ENCODE measurements at regions of chr14 and their contacts with region 1.

Region 1: DNA sequence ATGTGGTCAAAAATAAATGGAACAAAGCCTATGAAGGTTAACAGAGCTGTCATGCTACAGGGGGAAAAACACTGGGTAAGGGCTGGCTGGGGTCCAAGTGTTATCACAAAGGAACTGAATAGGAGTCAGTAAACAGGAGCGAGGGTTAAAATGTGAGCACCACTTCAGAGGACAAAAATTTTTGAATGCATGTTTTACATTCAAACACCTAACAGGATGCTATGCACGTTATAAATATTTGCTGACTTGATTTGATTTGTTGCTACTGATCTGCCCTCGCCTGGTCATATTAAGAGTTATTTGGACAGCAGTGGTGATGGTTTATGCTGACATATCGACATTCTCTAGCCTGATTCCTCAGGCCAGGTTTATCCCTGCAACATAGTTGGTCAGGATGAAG is 7.4 kb upstream of the KTN1 start:
- DNase-seq: peak in 3 of 5 donors; percentile 31 to 45 (median 43)
- ATAC-seq: peak; percentile 34 to 81 (median 49)
- H3K4me3 ChIP-seq: no peak overlapping the region
- H3K27ac ChIP-seq: no peak overlapping the region
- H3K4me1 ChIP-seq: peaks cover 0 to 10% (median 0%) of the 10 kb centered on the region in 12 donors
- H3K27me3 ChIP-seq: no peaks in the 10 kb centered on the region
- CTCF ChIP-seq: peak in 1 of 12 donors; percentile 4
- POLR2A ChIP-seq: no peak

Region 2: DNA sequence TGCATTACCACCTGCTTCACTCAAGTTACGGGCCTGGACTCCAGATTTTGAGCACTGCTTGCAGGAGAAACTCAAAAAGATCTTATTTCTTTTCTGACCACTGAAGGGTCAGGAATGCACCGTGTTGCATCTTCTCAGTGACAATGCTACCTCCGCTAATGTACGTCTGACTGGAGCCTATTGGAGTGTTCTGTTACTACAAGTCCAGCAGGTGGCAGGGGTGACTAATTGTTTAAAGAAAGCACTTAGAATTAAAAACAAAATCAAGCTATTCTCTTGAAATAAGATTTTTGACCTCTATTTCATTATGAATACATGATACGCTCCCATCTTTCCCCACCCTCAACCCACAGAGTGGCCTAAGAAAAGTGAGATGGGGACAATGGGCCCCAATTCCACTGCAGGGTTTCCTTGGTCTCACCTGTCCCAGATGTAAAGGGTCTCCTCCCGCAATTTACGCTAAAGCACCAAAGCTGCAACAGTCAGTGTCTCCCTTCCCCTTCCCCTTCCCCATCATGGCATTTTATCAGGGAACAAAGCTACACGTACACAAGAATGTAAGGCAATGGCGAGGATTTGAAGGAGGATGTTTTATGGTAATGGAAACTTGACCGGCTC is 134.4 kb before region 1 on chr14:
- intact Hi-C with region 1: loop called in 5 of 10 experiments (anchors 5 to 10 kb)
- DNase-seq: no peak
- ATAC-seq: peak in 3 of 4 donors; percentile 57 to 66 (median 57)
- H3K4me3 ChIP-seq: no peak overlapping the region
- H3K27ac ChIP-seq: no peak overlapping the region
- H3K4me1 ChIP-seq: no peaks in the 10 kb centered on the region
- H3K27me3 ChIP-seq: peaks cover 0 to 17% (median 0%) of the 10 kb centered on the region in 9 donors
- CTCF ChIP-seq: peak; percentile 22 to 65 (median 46)
- POLR2A ChIP-seq: no peak